ENCODE measurements at regions of chr18 and their contacts with region 1.

Region 1: DNA sequence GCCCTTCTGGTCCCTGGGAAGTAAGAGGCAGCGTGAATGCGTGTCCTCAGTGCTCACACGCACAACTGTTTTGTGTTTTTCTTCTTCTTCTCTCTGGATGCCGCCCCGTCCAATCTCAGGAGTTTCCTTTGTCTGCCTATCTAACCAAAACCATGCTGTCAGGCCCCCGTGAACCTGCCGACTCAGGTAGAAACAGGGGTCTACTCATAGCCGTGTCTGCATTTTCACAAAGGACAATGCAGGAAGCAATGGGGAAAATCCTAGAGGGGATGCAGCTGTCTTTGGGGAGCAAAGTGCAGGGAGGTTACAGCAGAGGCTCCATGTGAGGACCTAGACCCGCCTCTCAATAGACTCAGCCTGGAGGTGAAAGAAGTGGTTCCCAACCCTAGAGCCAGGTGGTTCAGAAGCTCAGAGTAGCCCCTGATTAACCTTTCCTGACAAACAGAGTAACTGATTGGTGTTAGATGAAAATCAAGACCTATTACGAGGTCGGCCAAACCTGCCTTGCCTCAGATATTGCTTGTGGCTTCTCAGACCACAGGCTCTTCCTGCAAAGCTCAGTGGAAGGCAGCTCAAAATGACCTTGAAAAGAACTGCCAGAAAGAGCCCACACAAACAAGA is 49.3 kb downstream of the CD226 start:
- DNase-seq: peak; percentile 59
- H3K4me3 Mint-ChIP-seq: peak overlapping the region; percentile 67
- H3K27ac Mint-ChIP-seq: peak overlapping the region; percentile 94
- H3K4me1 Mint-ChIP-seq: peaks cover 78% of the 10 kb centered on the region
- H3K27me3 Mint-ChIP-seq: no peaks in the 10 kb centered on the region

Region 2: DNA sequence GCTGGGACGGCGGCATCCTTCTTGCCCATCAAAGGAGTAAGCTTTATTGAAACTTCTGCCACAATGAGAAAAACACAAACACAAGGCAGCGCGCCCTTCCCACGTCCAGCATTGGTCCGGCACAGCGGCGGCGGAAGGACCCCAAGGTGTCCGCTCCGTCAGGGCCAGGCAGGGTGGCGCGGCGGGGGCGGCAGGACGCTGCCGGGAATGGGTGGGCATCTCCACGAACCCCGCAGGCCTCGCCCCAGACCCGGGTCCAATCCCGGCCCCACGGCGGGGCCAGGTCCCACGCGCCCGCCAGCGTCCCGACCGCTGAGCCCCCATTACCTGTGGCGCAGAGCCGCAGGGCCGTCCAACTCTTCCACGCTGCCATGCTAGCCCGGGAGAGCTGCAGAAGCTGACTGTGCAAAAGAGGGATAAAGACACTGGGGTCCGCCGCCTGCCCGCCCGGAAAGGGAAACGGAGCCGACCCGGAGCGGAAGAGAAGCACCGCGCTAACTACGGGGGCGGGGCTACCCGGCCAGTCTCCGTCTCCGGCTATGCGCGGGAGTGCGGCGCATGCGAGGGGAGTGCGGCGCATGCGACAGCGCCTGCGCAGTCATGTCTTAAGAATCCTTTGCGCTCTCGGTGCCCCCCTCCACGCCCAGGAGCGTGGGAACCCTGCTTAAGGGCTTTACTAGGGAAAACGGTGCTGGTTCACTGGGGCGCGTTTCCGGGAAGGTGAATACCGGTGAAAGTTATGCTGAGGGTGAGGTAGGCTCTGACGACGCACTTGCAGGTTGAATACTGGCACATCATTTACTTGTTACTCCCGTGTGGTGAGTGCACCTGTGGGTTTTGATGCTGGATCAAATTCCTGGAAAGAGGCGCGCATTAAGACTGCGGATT is 1183.5 kb before region 1 on chr18 and contains the start of gene TMX3:
- CTCF ChIA-PET with region 1: no interaction called
- POLR2A ChIA-PET with region 1: no interaction called
- intact Hi-C with region 1: loop called (anchors 10 kb)
- DNase-seq: peak; percentile 94
- H3K4me3 Mint-ChIP-seq: peak within 1 kb of the TSS; percentile 97
- H3K27ac Mint-ChIP-seq: peak within 1 kb of the TSS; percentile 93
- H3K4me1 Mint-ChIP-seq: peaks cover 42% of the 10 kb centered on the region
- H3K27me3 Mint-ChIP-seq: no peaks in the 10 kb centered on the region
- total RNA-seq, gene TMX3: 42.4 to 44.6 TPM

Region 3: DNA sequence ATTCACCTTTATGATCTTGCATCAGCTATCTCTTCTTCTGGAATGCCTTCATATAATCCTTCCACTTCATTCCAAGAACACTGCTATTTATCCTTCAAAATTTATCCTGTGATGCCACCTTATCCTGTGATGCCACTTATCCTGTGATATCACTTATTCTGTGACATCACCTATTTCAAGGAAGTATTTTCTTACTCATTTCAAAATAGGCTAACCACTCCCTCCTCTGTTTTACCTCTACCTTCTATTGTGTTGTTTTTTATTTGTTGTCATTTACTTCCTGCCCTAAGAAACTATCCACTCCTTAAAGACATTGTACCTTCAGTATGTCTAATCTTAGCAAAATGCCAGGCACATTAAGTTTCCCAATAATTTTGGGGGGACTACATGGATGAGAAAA is 10.5 kb after region 1 on chr18:
- CTCF ChIA-PET with region 1: interaction called, 4 read pairs
- POLR2A ChIA-PET with region 1: interaction called, 13 read pairs
- intact Hi-C with region 1: loop called (anchors 1 kb)
- DNase-seq: no peak
- H3K4me3 Mint-ChIP-seq: peak overlapping the region; percentile 0
- H3K27ac Mint-ChIP-seq: peak overlapping the region; percentile 60
- H3K4me1 Mint-ChIP-seq: peaks cover 74% of the 10 kb centered on the region
- H3K27me3 Mint-ChIP-seq: no peaks in the 10 kb centered on the region

Region 4: DNA sequence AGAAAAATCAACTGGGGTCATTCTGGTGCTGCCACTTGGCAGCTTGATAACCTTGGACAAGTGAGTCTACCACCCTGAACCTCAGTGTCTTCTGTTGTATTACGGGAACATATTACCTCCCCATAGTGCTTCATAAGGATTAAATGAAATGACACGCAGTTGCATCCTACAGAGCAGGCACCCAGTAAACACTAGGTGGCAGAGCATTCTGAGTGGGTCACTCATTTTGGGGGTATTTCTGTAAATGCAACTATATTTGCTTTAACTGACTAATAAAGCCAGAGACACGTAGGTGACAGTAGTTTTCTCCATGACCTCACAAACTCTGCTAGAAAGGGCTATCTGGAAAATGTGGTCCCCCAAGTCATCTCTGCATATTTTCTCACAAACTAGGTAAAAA is 44.7 kb after region 1 on chr18:
- CTCF ChIA-PET with region 1: interaction called, 14 read pairs
- POLR2A ChIA-PET with region 1: interaction called, 43 read pairs
- intact Hi-C with region 1: loop called (anchors 1 kb)
- DNase-seq: peak; percentile 50
- H3K4me3 Mint-ChIP-seq: peak overlapping the region; percentile 63
- H3K27ac Mint-ChIP-seq: peak overlapping the region; percentile 94
- H3K4me1 Mint-ChIP-seq: peaks cover 84% of the 10 kb centered on the region
- H3K27me3 Mint-ChIP-seq: no peaks in the 10 kb centered on the region

Region 5: DNA sequence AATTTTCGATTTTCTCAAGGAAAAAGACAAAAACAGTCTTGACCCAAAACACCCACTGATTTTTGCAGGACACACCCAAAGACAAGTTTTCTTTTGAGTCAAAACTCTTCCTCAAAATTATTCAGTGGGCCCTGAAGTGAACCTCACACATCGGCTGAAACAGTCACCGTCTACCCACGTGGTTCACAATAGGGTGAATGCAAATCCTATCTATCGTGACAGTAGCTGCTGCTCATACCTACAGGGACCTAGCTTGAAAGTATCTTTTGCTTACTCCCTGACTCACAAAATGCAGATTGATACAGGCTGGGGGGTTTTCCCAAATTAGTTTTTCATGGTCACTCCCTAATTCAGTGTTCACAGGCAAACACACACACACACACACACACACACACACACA is 60.1 kb after region 1 on chr18:
- CTCF ChIA-PET with region 1: interaction called, 14 read pairs
- POLR2A ChIA-PET with region 1: interaction called, 48 read pairs
- intact Hi-C with region 1: loop called (anchors 1 kb)
- DNase-seq: peak; percentile 73
- H3K4me3 Mint-ChIP-seq: no peak overlapping the region
- H3K27ac Mint-ChIP-seq: no peak overlapping the region
- H3K4me1 Mint-ChIP-seq: peaks cover 20% of the 10 kb centered on the region
- H3K27me3 Mint-ChIP-seq: no peaks in the 10 kb centered on the region

Region 6: GRCh38 chr18:70044632-70045031 is 146.3 kb after region 1 on chr18:
- CTCF ChIA-PET with region 1: no interaction called
- POLR2A ChIA-PET with region 1: no interaction called
- intact Hi-C with region 1: loop called (anchors 5 kb)
- DNase-seq: no peak
- H3K4me3 Mint-ChIP-seq: no peak overlapping the region
- H3K27ac Mint-ChIP-seq: no peak overlapping the region
- H3K4me1 Mint-ChIP-seq: peaks cover 3% of the 10 kb centered on the region
- H3K27me3 Mint-ChIP-seq: no peaks in the 10 kb centered on the region

Region 7: GRCh38 chr18:70205421-70206397 is 307.4 kb after region 1 on chr18 and contains the start of gene RTTN:
- CTCF ChIA-PET with region 1: no interaction called
- POLR2A ChIA-PET with region 1: no interaction called
- intact Hi-C with region 1: loop called (anchors 5 kb)
- DNase-seq: peak; percentile 94
- H3K4me3 Mint-ChIP-seq: peak within 1 kb of the TSS; percentile 92
- H3K27ac Mint-ChIP-seq: peak within 1 kb of the TSS; percentile 99
- H3K4me1 Mint-ChIP-seq: peaks cover 30% of the 10 kb centered on the region
- H3K27me3 Mint-ChIP-seq: peaks cover 5% of the 10 kb centered on the region
- total RNA-seq, gene RTTN: 27.3 to 28.9 TPM

Region 8: DNA sequence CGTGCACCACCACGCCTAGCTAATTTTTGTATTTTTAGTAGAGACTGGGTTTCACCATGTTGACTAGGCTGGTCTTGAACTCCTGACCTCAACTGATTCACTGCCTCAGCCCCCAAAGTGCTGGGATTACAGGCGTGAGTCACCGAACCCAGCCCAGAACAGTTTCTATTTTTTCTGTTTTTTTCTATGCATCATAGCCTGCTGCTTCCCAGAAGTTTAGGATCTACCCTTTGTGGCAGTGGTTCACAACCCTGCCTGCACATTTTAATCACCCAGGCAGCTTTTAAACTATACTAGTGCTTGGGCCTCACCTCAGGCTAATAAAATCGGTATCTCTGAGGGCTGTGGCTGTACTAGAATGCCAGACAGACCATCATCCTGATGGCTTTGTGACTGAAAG is 350.8 kb after region 1 on chr18:
- CTCF ChIA-PET with region 1: no interaction called
- POLR2A ChIA-PET with region 1: no interaction called
- intact Hi-C with region 1: no loop called
- DNase-seq: no peak
- H3K4me3 Mint-ChIP-seq: no peak overlapping the region
- H3K27ac Mint-ChIP-seq: no peak overlapping the region
- H3K4me1 Mint-ChIP-seq: no peaks in the 10 kb centered on the region
- H3K27me3 Mint-ChIP-seq: no peaks in the 10 kb centered on the region